Dendritic cell treated with granulocyte-macrophage colony-stimulating factor and Interleukin-4, amounts not matched to agents 40 ng/mL and 50 ng/mL, for 4 days (primary cell): ENCODE measurements at regions of chr15 and their contacts with region 1.

Region 1: GRCh38 chr15:55407949-55408791 is at the starts of genes CCPG1 and PIERCE2:
- H3K4me3 Mint-ChIP-seq: peak within 1 kb of the TSS; percentile 88
- H3K27ac Mint-ChIP-seq: peak within 1 kb of the TSS; percentile 87
- H3K4me1 Mint-ChIP-seq: peaks cover 18% of the 10 kb centered on the region
- H3K27me3 Mint-ChIP-seq: no peaks in the 10 kb centered on the region

Region 2: GRCh38 chr15:55196458-55197361 is 211.5 kb before region 1 on chr15 and contains the start of gene RSL24D1:
- intact Hi-C with region 1: loop called (anchors 5 kb)
- H3K4me3 Mint-ChIP-seq: no peak within 1 kb of the TSS
- H3K27ac Mint-ChIP-seq: no peak within 1 kb of the TSS
- H3K4me1 Mint-ChIP-seq: peaks cover 5% of the 10 kb centered on the region
- H3K27me3 Mint-ChIP-seq: no peaks in the 10 kb centered on the region

Region 3: DNA sequence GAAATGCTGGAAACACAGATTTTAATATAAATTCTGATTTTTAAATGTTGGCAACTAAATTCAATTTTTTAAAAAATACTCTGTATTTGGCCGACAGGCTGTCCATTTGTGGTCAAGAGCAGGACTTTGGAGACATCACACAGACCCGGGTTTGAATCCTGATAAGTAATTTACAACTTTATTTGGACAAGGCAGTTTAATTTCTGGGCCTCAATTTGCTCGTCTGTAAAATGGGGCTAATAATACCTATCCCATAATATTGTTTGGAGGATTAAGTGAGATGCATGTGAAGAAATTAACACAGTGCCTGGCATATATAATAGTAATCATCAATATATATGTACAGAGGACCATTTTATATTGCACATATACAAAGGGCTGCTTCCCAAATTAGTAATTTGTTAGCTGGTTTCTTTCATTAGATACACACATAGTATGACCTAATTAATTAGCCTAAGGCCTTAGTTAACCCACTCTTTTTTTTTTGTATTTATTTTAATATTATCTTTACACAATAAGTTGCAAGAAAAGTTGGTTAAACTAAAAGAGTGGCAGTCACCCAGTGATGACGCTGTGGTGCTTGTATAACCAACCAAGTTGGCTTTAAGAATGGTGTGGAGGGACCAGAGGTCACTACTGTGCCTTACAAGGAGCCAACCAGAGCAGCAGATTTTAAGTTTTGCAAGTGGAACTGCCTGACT is 88.5 kb before region 1 on chr15:
- intact Hi-C with region 1: loop called (anchors 5 kb)
- H3K4me3 Mint-ChIP-seq: peak overlapping the region; percentile 95
- H3K27ac Mint-ChIP-seq: peak overlapping the region; percentile 98
- H3K4me1 Mint-ChIP-seq: peaks cover 57% of the 10 kb centered on the region
- H3K27me3 Mint-ChIP-seq: no peaks in the 10 kb centered on the region

Region 4: GRCh38 chr15:55366981-55367380 is 41.2 kb before region 1 on chr15:
- intact Hi-C with region 1: loop called (anchors 5 kb)
- H3K4me3 Mint-ChIP-seq: no peak overlapping the region
- H3K27ac Mint-ChIP-seq: no peak overlapping the region
- H3K4me1 Mint-ChIP-seq: peaks cover 10% of the 10 kb centered on the region
- H3K27me3 Mint-ChIP-seq: no peaks in the 10 kb centered on the region